Stomach (tissue), 19 donors: ENCODE measurements at regions of chr4 and their contacts with region 1.

Region 1: DNA sequence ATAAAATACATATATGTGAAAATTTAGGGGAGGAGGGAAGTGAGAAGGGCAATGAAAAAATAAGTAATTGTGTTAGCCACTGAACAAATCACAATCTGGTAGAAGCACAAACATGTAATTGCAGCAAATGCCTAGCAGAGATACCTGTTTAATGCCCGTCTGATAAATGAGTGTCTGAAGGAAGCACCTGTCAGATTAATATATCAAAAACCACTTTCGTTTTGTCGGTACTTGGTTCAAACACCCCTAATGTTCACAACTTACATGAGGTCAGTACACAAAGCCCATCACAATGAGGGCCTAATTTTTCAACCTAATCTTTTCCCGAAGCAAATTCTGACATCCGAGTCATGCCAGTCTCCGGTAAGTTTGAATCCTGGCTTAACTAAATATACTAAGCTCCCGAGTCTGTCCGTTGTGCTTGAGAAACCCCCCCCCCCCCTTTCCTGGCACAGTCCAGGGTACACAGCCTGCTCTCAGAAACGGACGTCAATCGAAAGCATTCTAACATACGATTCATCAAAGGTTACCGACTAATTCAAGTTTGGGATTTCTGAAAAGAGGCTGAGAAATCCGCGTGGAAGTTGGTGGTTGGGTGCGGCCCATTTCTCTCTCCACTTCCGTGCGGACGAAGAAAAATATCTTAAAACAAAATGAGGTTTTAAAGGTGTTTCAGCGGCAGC is 758 bp downstream of the SDAD1 start:
- DNase-seq: peak in 1 of 2 donors; percentile 31
- H3K4me3 ChIP-seq: peak overlapping the region; percentile 58 to 96 (median 78)
- H3K27ac ChIP-seq: peak overlapping the region in 4 of 5 donors; percentile 60 to 81 (median 74)
- H3K4me1 ChIP-seq: peaks cover 15 to 50% (median 34%) of the 10 kb centered on the region in 4 donors
- H3K27me3 ChIP-seq: no peaks in the 10 kb centered on the region
- CTCF ChIP-seq: no peak
- EP300 ChIP-seq: no peak
- POLR2A ChIP-seq: no peak

Region 2: GRCh38 chr4:75555294-75556164 is 434.5 kb before region 1 on chr4 and contains the start of gene ODAPH:
- intact Hi-C with region 1: no loop called
- DNase-seq: peak in 1 of 2 donors; percentile 8
- H3K4me3 ChIP-seq: no peak within 1 kb of the TSS
- H3K27ac ChIP-seq: no peak within 1 kb of the TSS
- H3K4me1 ChIP-seq: no peaks in the 10 kb centered on the region
- H3K27me3 ChIP-seq: peaks cover 0 to 6% (median 0%) of the 10 kb centered on the region in 3 donors
- CTCF ChIP-seq: no peak
- EP300 ChIP-seq: no peak
- POLR2A ChIP-seq: no peak
- total RNA-seq, gene ODAPH: not detected

Region 3: GRCh38 chr4:76036855-76037254 is 46.9 kb after region 1 on chr4:
- intact Hi-C with region 1: no loop called
- DNase-seq: no peak
- H3K4me3 ChIP-seq: no peak overlapping the region
- H3K27ac ChIP-seq: no peak overlapping the region
- H3K4me1 ChIP-seq: peaks cover 0 to 12% (median 0%) of the 10 kb centered on the region in 4 donors
- H3K27me3 ChIP-seq: no peaks in the 10 kb centered on the region
- CTCF ChIP-seq: no peak
- EP300 ChIP-seq: no peak
- POLR2A ChIP-seq: no peak

Region 4: GRCh38 chr4:76067652-76068286 is 77.8 kb after region 1 on chr4:
- intact Hi-C with region 1: loop called (anchors 5 kb)
- DNase-seq: peak; percentile 74 to 91
- H3K4me3 ChIP-seq: no peak overlapping the region
- H3K27ac ChIP-seq: no peak overlapping the region
- H3K4me1 ChIP-seq: no peaks in the 10 kb centered on the region
- H3K27me3 ChIP-seq: no peaks in the 10 kb centered on the region
- CTCF ChIP-seq: peak in 5 of 7 experiments; percentile 68 to 82 (median 68)
- EP300 ChIP-seq: no peak
- POLR2A ChIP-seq: no peak